ENCODE measurements at regions of chr20 and their contacts with region 1.

Region 1: GRCh38 chr20:63941282-63942060 is 14.7 kb downstream of the UCKL1 start:
- DNase-seq: peak; percentile 90
- ATAC-seq: peak; percentile 83
- H3K4me3 Mint-ChIP-seq: no peak overlapping the region
- H3K27ac Mint-ChIP-seq: peak overlapping the region; percentile 60
- H3K4me1 Mint-ChIP-seq: peaks cover 10% of the 10 kb centered on the region
- H3K27me3 Mint-ChIP-seq: no peaks in the 10 kb centered on the region

Region 2: GRCh38 chr20:63955827-63956663 is 14.6 kb after region 1 on chr20 and contains the start of gene UCKL1:
- CTCF ChIA-PET with region 1: interaction called, 4 read pairs
- POLR2A ChIA-PET with region 1: no interaction called
- intact Hi-C with region 1: loop called in 1 of 2 experiments (anchors 1 kb)
- DNase-seq: peak; percentile 95
- ATAC-seq: peak; percentile 78
- H3K4me3 Mint-ChIP-seq: peak within 1 kb of the TSS; percentile 77
- H3K27ac Mint-ChIP-seq: peak within 1 kb of the TSS; percentile 89
- H3K4me1 Mint-ChIP-seq: peaks cover 37% of the 10 kb centered on the region
- H3K27me3 Mint-ChIP-seq: no peaks in the 10 kb centered on the region
- total RNA-seq, gene UCKL1: 28.3 to 32.2 TPM

Measured in activated CD4-positive, alpha-beta T cell treated with anti-CD3 and anti-CD28 coated beads for 36 hours (primary cell).